ENCODE measurements at regions of chr7 and their contacts with region 1.

Region 1: GRCh38 chr7:101244375-101245146 is at the start of gene FIS1:
- DNase-seq: peak; percentile 84 to 96 (median 90)
- ATAC-seq: peak; percentile 94
- H3K4me3 ChIP-seq: peak within 1 kb of the TSS; percentile 87
- H3K4me3 Mint-ChIP-seq: peak within 1 kb of the TSS; percentile 98
- H3K27ac ChIP-seq: peak within 1 kb of the TSS; percentile 91 to 92
- H3K27ac Mint-ChIP-seq: peak within 1 kb of the TSS; percentile 96
- H3K4me1 ChIP-seq: peaks cover 23% of the 10 kb centered on the region
- H3K4me1 Mint-ChIP-seq: peaks cover 44% of the 10 kb centered on the region
- H3K27me3 ChIP-seq: no peaks in the 10 kb centered on the region
- H3K27me3 Mint-ChIP-seq: no peaks in the 10 kb centered on the region
- CTCF ChIP-seq: peak; percentile 99
- total RNA-seq, gene FIS1: 81.2 to 82.3 TPM

Region 2: GRCh38 chr7:100837099-100837836 is 407.3 kb before region 1 on chr7:
- CTCF ChIA-PET with region 1: no interaction called
- POLR2A ChIA-PET with region 1: no interaction called
- intact Hi-C with region 1: loop called in 1 of 2 experiments (anchors 5 kb)
- DNase-seq: peak; percentile 56 to 87 (median 76)
- ATAC-seq: peak; percentile 99
- H3K4me3 ChIP-seq: peak overlapping the region; percentile 61
- H3K4me3 Mint-ChIP-seq: peak overlapping the region; percentile 85
- H3K27ac ChIP-seq: peak overlapping the region in 1 of 2 donors; percentile 10
- H3K27ac Mint-ChIP-seq: peak overlapping the region; percentile 76
- H3K4me1 ChIP-seq: peaks cover 16% of the 10 kb centered on the region
- H3K4me1 Mint-ChIP-seq: peaks cover 10% of the 10 kb centered on the region
- H3K27me3 ChIP-seq: no peaks in the 10 kb centered on the region
- H3K27me3 Mint-ChIP-seq: no peaks in the 10 kb centered on the region
- CTCF ChIP-seq: no peak

Region 3: GRCh38 chr7:101085162-101085987 is 159.2 kb before region 1 on chr7 and contains the start of gene TRIM56:
- CTCF ChIA-PET with region 1: no interaction called
- POLR2A ChIA-PET with region 1: no interaction called
- intact Hi-C with region 1: loop called in 1 of 2 experiments (anchors 5 kb)
- DNase-seq: peak; percentile 52 to 88 (median 70)
- ATAC-seq: peak; percentile 90
- H3K4me3 ChIP-seq: peak within 1 kb of the TSS; percentile 99
- H3K4me3 Mint-ChIP-seq: peak within 1 kb of the TSS; percentile 100
- H3K27ac ChIP-seq: peak within 1 kb of the TSS; percentile 91 to 92
- H3K27ac Mint-ChIP-seq: peak within 1 kb of the TSS; percentile 96
- H3K4me1 ChIP-seq: peaks cover 53% of the 10 kb centered on the region
- H3K4me1 Mint-ChIP-seq: peaks cover 28% of the 10 kb centered on the region
- H3K27me3 ChIP-seq: no peaks in the 10 kb centered on the region
- H3K27me3 Mint-ChIP-seq: no peaks in the 10 kb centered on the region
- CTCF ChIP-seq: no peak
- total RNA-seq, gene TRIM56: 29.9 to 31.8 TPM

Region 4: GRCh38 chr7:101217388-101218235 is 26.9 kb before region 1 on chr7 and contains the starts of genes PLOD3 and ZNHIT1:
- CTCF ChIA-PET with region 1: interaction called, 39 read pairs
- POLR2A ChIA-PET with region 1: interaction called, 55 read pairs
- intact Hi-C with region 1: loop called (anchors 1 kb)
- DNase-seq: peak; percentile 90 to 99 (median 96)
- ATAC-seq: peak; percentile 81
- H3K4me3 ChIP-seq: peak within 1 kb of the TSS; percentile 83
- H3K4me3 Mint-ChIP-seq: peak within 1 kb of the TSS; percentile 95
- H3K27ac ChIP-seq: peak within 1 kb of the TSS; percentile 69 to 90
- H3K27ac Mint-ChIP-seq: peak within 1 kb of the TSS; percentile 87
- H3K4me1 ChIP-seq: peaks cover 47% of the 10 kb centered on the region
- H3K4me1 Mint-ChIP-seq: peaks cover 38% of the 10 kb centered on the region
- H3K27me3 ChIP-seq: no peaks in the 10 kb centered on the region
- H3K27me3 Mint-ChIP-seq: no peaks in the 10 kb centered on the region
- CTCF ChIP-seq: no peak
- total RNA-seq, gene PLOD3: 13.8 to 15.9 TPM
- total RNA-seq, gene ZNHIT1: 28.4 to 30.6 TPM

Region 5: DNA sequence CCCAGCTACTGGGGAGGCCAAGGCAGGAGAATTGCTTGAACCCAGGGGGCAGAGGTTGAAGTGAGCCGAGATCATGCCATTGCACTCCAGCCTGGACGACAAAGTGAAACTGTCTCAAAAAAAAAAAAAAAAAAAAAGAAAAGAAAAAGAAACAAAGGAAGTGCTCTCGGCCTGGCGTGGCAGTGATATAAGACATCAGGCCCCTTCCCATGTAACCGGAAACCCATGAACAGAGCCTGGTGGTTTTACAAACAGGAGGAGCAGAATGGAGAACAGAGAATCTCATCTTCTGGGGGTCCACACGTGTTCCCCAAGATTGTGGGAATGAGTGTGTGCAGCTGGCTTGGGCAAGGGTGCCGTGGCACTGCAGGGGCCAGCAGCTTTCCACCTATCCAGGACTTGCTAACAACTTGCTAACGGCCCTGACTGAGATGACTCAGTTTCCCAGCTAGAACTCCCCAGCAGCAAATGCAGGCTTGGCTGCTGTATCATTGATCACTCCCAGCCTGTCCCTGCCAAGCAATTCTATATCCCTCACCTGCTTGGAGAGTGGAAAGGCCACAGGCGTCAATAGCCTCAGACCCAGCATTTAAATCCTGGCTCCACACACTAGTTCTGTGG is 221.1 kb after region 1 on chr7:
- CTCF ChIA-PET with region 1: no interaction called
- POLR2A ChIA-PET with region 1: no interaction called
- intact Hi-C with region 1: no loop called
- DNase-seq: peak in 2 of 14 experiments; percentile 18 to 31
- ATAC-seq: no peak
- H3K4me3 ChIP-seq: peak overlapping the region; percentile 10
- H3K4me3 Mint-ChIP-seq: no peak overlapping the region
- H3K27ac ChIP-seq: peak overlapping the region in 1 of 2 donors; percentile 48
- H3K27ac Mint-ChIP-seq: no peak overlapping the region
- H3K4me1 ChIP-seq: peaks cover 11% of the 10 kb centered on the region
- H3K4me1 Mint-ChIP-seq: no peaks in the 10 kb centered on the region
- H3K27me3 ChIP-seq: no peaks in the 10 kb centered on the region
- H3K27me3 Mint-ChIP-seq: no peaks in the 10 kb centered on the region
- CTCF ChIP-seq: no peak

Region 6: GRCh38 chr7:102464577-102465280 is 1220.2 kb after region 1 on chr7 and contains the starts of genes ALKBH4 and LRWD1:
- CTCF ChIA-PET with region 1: no interaction called
- POLR2A ChIA-PET with region 1: no interaction called
- intact Hi-C with region 1: loop called in 1 of 2 experiments (anchors 5 kb)
- DNase-seq: peak; percentile 85 to 97 (median 94)
- ATAC-seq: peak; percentile 93
- H3K4me3 ChIP-seq: peak within 1 kb of the TSS; percentile 99
- H3K4me3 Mint-ChIP-seq: peak within 1 kb of the TSS; percentile 92
- H3K27ac ChIP-seq: peak within 1 kb of the TSS; percentile 40 to 46
- H3K27ac Mint-ChIP-seq: peak within 1 kb of the TSS; percentile 75
- H3K4me1 ChIP-seq: peaks cover 52% of the 10 kb centered on the region
- H3K4me1 Mint-ChIP-seq: peaks cover 34% of the 10 kb centered on the region
- H3K27me3 ChIP-seq: no peaks in the 10 kb centered on the region
- H3K27me3 Mint-ChIP-seq: no peaks in the 10 kb centered on the region
- CTCF ChIP-seq: peak; percentile 29
- total RNA-seq, gene ALKBH4: 2.9 to 3.5 TPM
- total RNA-seq, gene LRWD1: 12.9 to 13.9 TPM